Adrenal gland (tissue), 19 donors: ENCODE measurements at regions of chr20 and their contacts with region 1.

Region 1: GRCh38 chr20:59020938-59021551 is 1.8 kb downstream of the TUBB1 start:
- DNase-seq: peak in 1 of 7 donors; percentile 17
- H3K4me3 ChIP-seq: no peak overlapping the region
- H3K27ac ChIP-seq: no peak overlapping the region
- H3K4me1 ChIP-seq: peaks cover 0 to 23% of the 10 kb centered on the region in 2 donors
- H3K27me3 ChIP-seq: no peaks in the 10 kb centered on the region
- CTCF ChIP-seq: no peak
- POLR2A ChIP-seq: no peak

Region 2: GRCh38 chr20:58800134-58800656 is 220.8 kb before region 1 on chr20:
- intact Hi-C with region 1: no loop called
- DNase-seq: no peak
- H3K4me3 ChIP-seq: no peak overlapping the region
- H3K27ac ChIP-seq: no peak overlapping the region
- H3K4me1 ChIP-seq: no peaks in the 10 kb centered on the region
- H3K27me3 ChIP-seq: no peaks in the 10 kb centered on the region
- CTCF ChIP-seq: no peak
- POLR2A ChIP-seq: no peak

Region 3: DNA sequence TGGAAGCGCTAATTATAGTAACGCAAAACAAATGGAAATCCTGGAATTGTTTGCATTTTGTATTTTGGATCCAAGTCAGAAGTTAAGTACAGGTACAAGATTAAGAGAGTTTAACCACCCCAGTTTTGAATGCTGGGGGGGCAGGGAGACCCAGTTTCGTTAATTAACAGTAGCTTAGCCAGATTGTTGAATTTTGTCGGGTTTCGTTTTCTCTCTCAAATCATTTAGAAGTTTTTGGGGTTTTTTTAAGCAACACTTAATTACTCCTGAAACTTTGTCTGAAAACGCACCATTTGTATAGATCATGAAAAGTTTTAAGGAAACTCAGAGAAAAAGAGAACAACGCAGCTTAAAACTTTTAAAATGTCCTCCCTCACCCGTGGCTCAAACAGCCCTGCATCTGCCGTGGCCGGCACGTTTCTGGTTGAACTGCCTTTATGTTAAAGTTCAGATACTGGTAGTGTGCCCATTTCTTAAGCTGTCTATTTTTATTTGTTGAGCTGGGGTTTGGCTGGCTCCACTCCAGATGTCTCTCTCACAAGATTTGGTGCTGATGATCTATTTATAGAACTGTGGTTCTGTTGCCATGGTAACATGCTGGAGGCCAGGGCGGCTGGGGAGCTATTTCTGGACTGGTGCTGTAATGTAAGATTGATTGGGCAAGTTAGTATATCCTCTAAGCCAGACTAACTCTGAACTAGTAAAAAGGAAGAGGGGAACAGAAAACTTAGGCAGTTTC is 113.5 kb before region 1 on chr20:
- intact Hi-C with region 1: loop called in 1 of 2 experiments (anchors 10 kb)
- DNase-seq: peak; percentile 93 to 99 (median 95)
- H3K4me3 ChIP-seq: peak overlapping the region in 1 of 4 donors; percentile 23
- H3K27ac ChIP-seq: peak overlapping the region in 4 of 5 donors; percentile 52 to 80 (median 70)
- H3K4me1 ChIP-seq: peaks cover 27 to 46% of the 10 kb centered on the region in 2 donors
- H3K27me3 ChIP-seq: no peaks in the 10 kb centered on the region
- CTCF ChIP-seq: no peak
- POLR2A ChIP-seq: peak in 1 of 2 donors; percentile 54

Region 4: GRCh38 chr20:59134182-59134581 is 113.1 kb after region 1 on chr20:
- intact Hi-C with region 1: no loop called
- DNase-seq: no peak
- H3K4me3 ChIP-seq: no peak overlapping the region
- H3K27ac ChIP-seq: no peak overlapping the region
- H3K4me1 ChIP-seq: no peaks in the 10 kb centered on the region
- H3K27me3 ChIP-seq: no peaks in the 10 kb centered on the region
- CTCF ChIP-seq: no peak
- POLR2A ChIP-seq: no peak